Dorsolateral prefrontal cortex (tissue), 120 donors: ENCODE measurements at regions of chr5 and their contacts with region 1.

Region 1: DNA sequence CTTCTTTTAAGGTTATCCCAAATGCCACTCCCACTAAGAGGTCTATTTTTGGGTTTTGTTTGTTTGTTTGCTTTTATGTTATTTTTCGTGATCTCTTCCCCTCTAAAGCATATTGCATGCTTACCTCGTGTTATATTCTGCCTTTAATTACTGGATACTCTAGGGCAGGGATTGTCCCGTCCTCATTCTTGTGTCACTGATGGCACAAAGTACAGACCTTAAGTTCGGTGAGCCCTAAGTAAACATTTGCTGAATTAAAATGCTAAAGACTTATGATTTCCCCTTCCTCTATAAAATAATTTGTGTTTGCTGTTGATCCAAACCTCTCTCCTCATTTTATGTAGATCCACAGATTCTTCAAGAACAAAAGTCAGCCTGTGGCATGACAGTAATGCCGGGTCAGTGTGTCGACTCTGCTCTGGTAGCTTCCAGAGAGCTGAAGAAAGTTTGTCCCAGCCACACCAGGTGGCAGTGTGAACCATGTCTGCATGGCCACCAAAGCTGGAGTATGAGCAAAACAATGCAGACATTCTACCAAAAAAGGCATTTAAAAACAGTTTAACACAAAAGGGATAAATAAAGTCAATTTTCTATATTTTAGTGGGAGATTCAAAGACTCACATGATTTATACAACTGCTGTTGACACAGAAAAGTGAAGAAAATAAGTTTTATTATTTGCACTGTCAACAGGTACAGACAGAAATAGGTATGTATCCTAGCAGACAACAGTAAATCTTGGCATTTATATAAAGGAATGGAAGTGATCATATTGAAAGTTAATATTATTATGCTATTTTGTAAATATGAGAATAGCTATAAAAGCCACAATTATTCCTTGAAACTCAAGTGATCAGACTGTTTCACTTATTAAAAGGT is 17.9 kb upstream of the POC5 start:
- DNase-seq: peak in 8 of 10 donors; percentile 27 to 69 (median 62)
- H3K4me3 ChIP-seq: no peak overlapping the region
- H3K27ac ChIP-seq: peak overlapping the region in 2 of 59 donors; percentile 38 to 62
- H3K27me3 ChIP-seq: peaks cover 0 to 3% (median 0%) of the 10 kb centered on the region in 45 donors
- CTCF ChIP-seq: peak; percentile 16 to 79 (median 63)

Region 2: GRCh38 chr5:76256116-76256889 is 521.2 kb after region 1 on chr5:
- intact Hi-C with region 1: loop called in 1 of 2 experiments (anchors 5 kb)
- DNase-seq: peak in 7 of 10 donors; percentile 33 to 73 (median 59)
- H3K4me3 ChIP-seq: peak overlapping the region in 6 of 59 donors; percentile 5 to 31 (median 16)
- H3K27ac ChIP-seq: no peak overlapping the region
- H3K27me3 ChIP-seq: peaks cover 0 to 13% (median 0%) of the 10 kb centered on the region in 45 donors
- CTCF ChIP-seq: peak in 55 of 56 donors; percentile 18 to 83 (median 63)